Mammary epithelial cell (primary cell): ENCODE measurements at regions of chr17 and their contacts with region 1.

Region 1: GRCh38 chr17:48024937-48025906 is 12.4 kb downstream of the COPZ2 start:
- DNase-seq: peak; percentile 94
- H3K4me3 ChIP-seq: peak overlapping the region; percentile 47 to 55 (median 52)
- H3K27ac ChIP-seq: peak overlapping the region; percentile 89
- H3K4me1 ChIP-seq: peaks cover 37% of the 10 kb centered on the region
- H3K27me3 ChIP-seq: no peaks in the 10 kb centered on the region
- CTCF ChIP-seq: peak; percentile 67 to 85

Region 2: GRCh38 chr17:47785538-47786123 is 239.6 kb before region 1 on chr17:
- CTCF ChIA-PET with region 1: no interaction called
- dilution Hi-C with region 1: no loop called
- in situ Hi-C with region 1: no loop called
- intact Hi-C with region 1: no loop called
- DNase-seq: peak; percentile 11
- H3K4me3 ChIP-seq: no peak overlapping the region
- H3K27ac ChIP-seq: no peak overlapping the region
- H3K4me1 ChIP-seq: peaks cover 7% of the 10 kb centered on the region
- H3K27me3 ChIP-seq: peaks cover 13% of the 10 kb centered on the region
- CTCF ChIP-seq: no peak

Region 3: GRCh38 chr17:48002266-48002915 is 22.8 kb before region 1 on chr17:
- CTCF ChIA-PET with region 1: no interaction called
- dilution Hi-C with region 1: no loop called
- in situ Hi-C with region 1: no loop called
- intact Hi-C with region 1: loop called (anchors 2 kb)
- DNase-seq: peak; percentile 80
- H3K4me3 ChIP-seq: no peak overlapping the region
- H3K27ac ChIP-seq: peak overlapping the region; percentile 87
- H3K4me1 ChIP-seq: peaks cover 24% of the 10 kb centered on the region
- H3K27me3 ChIP-seq: no peaks in the 10 kb centered on the region
- CTCF ChIP-seq: no peak

Region 4: GRCh38 chr17:48060249-48060648 is 35.0 kb after region 1 on chr17:
- CTCF ChIA-PET with region 1: interaction called, 4 read pairs
- dilution Hi-C with region 1: loop called (anchors 5 kb)
- in situ Hi-C with region 1: no loop called
- intact Hi-C with region 1: no loop called
- DNase-seq: no peak
- H3K4me3 ChIP-seq: no peak overlapping the region
- H3K27ac ChIP-seq: no peak overlapping the region
- H3K4me1 ChIP-seq: peaks cover 12% of the 10 kb centered on the region
- H3K27me3 ChIP-seq: no peaks in the 10 kb centered on the region
- CTCF ChIP-seq: no peak

Region 5: GRCh38 chr17:48131216-48131824 is 106.1 kb after region 1 on chr17:
- CTCF ChIA-PET with region 1: interaction called, 5 read pairs
- dilution Hi-C with region 1: no loop called
- in situ Hi-C with region 1: loop called (anchors 5 to 10 kb)
- intact Hi-C with region 1: loop called (anchors 1 kb)
- DNase-seq: peak; percentile 46
- H3K4me3 ChIP-seq: no peak overlapping the region
- H3K27ac ChIP-seq: no peak overlapping the region
- H3K4me1 ChIP-seq: peaks cover 18% of the 10 kb centered on the region
- H3K27me3 ChIP-seq: no peaks in the 10 kb centered on the region
- CTCF ChIP-seq: peak; percentile 84 to 87

Region 6: GRCh38 chr17:48187872-48188608 is 162.8 kb after region 1 on chr17:
- CTCF ChIA-PET with region 1: no interaction called
- dilution Hi-C with region 1: no loop called
- in situ Hi-C with region 1: no loop called
- intact Hi-C with region 1: no loop called
- DNase-seq: no peak
- H3K4me3 ChIP-seq: no peak overlapping the region
- H3K27ac ChIP-seq: no peak overlapping the region
- H3K4me1 ChIP-seq: no peaks in the 10 kb centered on the region
- H3K27me3 ChIP-seq: no peaks in the 10 kb centered on the region
- CTCF ChIP-seq: no peak

Region 7: GRCh38 chr17:48215583-48216139 is 190.4 kb after region 1 on chr17:
- CTCF ChIA-PET with region 1: no interaction called
- dilution Hi-C with region 1: no loop called
- in situ Hi-C with region 1: no loop called
- intact Hi-C with region 1: loop called (anchors 1 kb)
- DNase-seq: peak; percentile 31
- H3K4me3 ChIP-seq: no peak overlapping the region
- H3K27ac ChIP-seq: no peak overlapping the region
- H3K4me1 ChIP-seq: no peaks in the 10 kb centered on the region
- H3K27me3 ChIP-seq: no peaks in the 10 kb centered on the region
- CTCF ChIP-seq: peak; percentile 66 to 81

Region 8: GRCh38 chr17:48483471-48484131 is 458.4 kb after region 1 on chr17:
- CTCF ChIA-PET with region 1: no interaction called
- dilution Hi-C with region 1: no loop called
- in situ Hi-C with region 1: no loop called
- intact Hi-C with region 1: loop called (anchors 10 kb)
- DNase-seq: peak; percentile 99
- H3K4me3 ChIP-seq: no peak overlapping the region
- H3K27ac ChIP-seq: peak overlapping the region; percentile 83
- H3K4me1 ChIP-seq: peaks cover 65% of the 10 kb centered on the region
- H3K27me3 ChIP-seq: no peaks in the 10 kb centered on the region
- CTCF ChIP-seq: no peak

Region 9: GRCh38 chr17:48724251-48725003 is 699.2 kb after region 1 on chr17:
- CTCF ChIA-PET with region 1: no interaction called
- dilution Hi-C with region 1: no loop called
- in situ Hi-C with region 1: no loop called
- intact Hi-C with region 1: no loop called
- DNase-seq: peak; percentile 51
- H3K4me3 ChIP-seq: no peak overlapping the region
- H3K27ac ChIP-seq: no peak overlapping the region
- H3K4me1 ChIP-seq: no peaks in the 10 kb centered on the region
- H3K27me3 ChIP-seq: peaks cover 83% of the 10 kb centered on the region
- CTCF ChIP-seq: peak; percentile 54 to 76

Region 10: GRCh38 chr17:48878918-48879898 is 854.0 kb after region 1 on chr17:
- CTCF ChIA-PET with region 1: no interaction called
- dilution Hi-C with region 1: no loop called
- in situ Hi-C with region 1: no loop called
- intact Hi-C with region 1: loop called (anchors 10 kb)
- DNase-seq: peak; percentile 48
- H3K4me3 ChIP-seq: no peak overlapping the region
- H3K27ac ChIP-seq: no peak overlapping the region
- H3K4me1 ChIP-seq: no peaks in the 10 kb centered on the region
- H3K27me3 ChIP-seq: no peaks in the 10 kb centered on the region
- CTCF ChIP-seq: peak; percentile 94 to 98